B cell (primary cell): ENCODE measurements at regions of chr16 and their contacts with region 1.

Region 1: DNA sequence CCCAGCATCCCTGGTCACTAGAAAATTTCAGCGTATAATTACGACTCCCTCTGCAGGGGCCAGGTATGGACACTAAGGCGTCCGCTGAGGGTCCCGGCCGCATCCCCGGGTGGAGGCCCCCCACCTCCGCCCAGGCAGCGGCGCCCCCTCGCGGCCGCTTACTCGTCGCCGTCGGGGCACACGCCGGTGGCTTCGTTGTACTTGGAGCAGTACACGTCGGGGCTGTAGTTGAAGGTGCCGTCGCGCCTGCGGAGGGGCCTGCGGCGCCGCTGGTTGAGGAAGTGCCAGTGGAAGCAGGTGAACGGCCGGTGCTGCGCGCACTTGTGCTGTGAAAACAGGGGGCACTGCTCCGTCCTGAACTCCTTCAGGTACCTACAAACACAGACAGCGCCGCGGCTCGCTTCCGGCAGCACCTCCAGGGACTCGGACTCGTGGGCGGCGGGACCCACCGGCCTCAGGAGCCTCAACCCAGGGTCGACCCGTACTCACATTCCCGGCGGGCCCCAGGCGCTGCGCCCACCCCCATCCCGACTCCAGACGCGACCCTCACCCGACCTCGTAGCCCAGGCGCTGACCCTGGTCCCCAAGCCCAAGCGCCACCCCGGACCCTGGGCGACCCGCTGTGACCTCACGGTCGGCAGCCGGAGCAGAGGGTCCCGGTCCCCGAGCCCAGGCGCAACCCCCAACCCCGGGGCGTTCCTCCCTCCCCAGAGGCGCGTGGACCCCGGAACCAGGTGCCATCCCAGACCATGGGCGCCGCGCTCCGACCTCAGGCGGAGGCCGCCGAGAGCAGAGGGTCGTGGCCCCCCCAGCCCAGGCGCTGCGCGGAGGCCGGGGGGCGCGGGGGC is 596 bp downstream of the UNKL start:
- DNase-seq: peak; percentile 84
- ATAC-seq: peak; percentile 59
- H3K4me3 ChIP-seq: peak overlapping the region in 4 of 5 experiments; percentile 76 to 92 (median 88)
- H3K4me3 Mint-ChIP-seq: peak overlapping the region; percentile 90
- H3K27ac ChIP-seq: peak overlapping the region; percentile 70 to 92
- H3K27ac Mint-ChIP-seq: peak overlapping the region; percentile 95
- H3K4me1 ChIP-seq: peaks cover 6 to 19% of the 10 kb centered on the region in 2 donors
- H3K4me1 Mint-ChIP-seq: peaks cover 18% of the 10 kb centered on the region
- H3K27me3 ChIP-seq: no peaks in the 10 kb centered on the region
- H3K27me3 Mint-ChIP-seq: no peaks in the 10 kb centered on the region
- CTCF ChIP-seq: peak; percentile 72

Region 2: DNA sequence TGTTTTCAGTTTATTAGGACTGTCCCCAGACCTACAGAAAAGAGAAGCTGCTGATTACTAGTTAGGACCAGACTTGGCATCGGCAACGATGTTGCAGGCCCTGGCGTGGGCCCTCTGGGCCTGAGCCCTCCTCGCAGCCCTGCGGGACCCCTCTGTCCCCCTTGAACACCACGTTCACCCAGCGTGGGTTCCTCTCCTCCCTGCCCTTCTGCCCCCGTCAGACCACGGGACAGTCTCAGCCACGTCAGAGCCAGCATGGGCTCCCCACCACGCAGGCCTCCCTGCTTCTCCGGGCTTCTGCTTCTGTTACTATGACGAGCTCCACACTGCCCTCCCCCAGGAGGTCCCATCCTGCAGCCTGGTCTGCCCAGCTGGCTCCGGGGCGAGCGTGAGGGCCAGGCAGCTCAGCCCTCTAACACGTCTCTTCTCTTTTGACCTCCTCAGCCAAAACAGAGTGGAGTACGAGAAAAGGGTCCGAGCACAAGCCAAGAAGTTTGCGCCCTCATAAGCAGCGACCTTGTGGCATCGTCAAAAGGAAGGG is 89.6 kb before region 1 on chr16:
- CTCF ChIA-PET with region 1: no interaction called
- POLR2A ChIA-PET with region 1: interaction called, 13 read pairs
- intact Hi-C with region 1: no loop called
- DNase-seq: no peak
- ATAC-seq: no peak
- H3K4me3 ChIP-seq: no peak overlapping the region
- H3K4me3 Mint-ChIP-seq: no peak overlapping the region
- H3K27ac ChIP-seq: no peak overlapping the region
- H3K27ac Mint-ChIP-seq: peak overlapping the region; percentile 77
- H3K4me1 ChIP-seq: peaks cover 0 to 23% of the 10 kb centered on the region in 2 donors
- H3K4me1 Mint-ChIP-seq: peaks cover 5% of the 10 kb centered on the region
- H3K27me3 ChIP-seq: no peaks in the 10 kb centered on the region
- H3K27me3 Mint-ChIP-seq: no peaks in the 10 kb centered on the region
- CTCF ChIP-seq: no peak

Region 3: GRCh38 chr16:1378804-1379303 is 35.1 kb before region 1 on chr16:
- CTCF ChIA-PET with region 1: interaction called, 4 read pairs
- POLR2A ChIA-PET with region 1: no interaction called
- intact Hi-C with region 1: loop called (anchors 5 kb)
- DNase-seq: peak; percentile 75
- ATAC-seq: peak; percentile 55
- H3K4me3 ChIP-seq: peak overlapping the region in 3 of 5 experiments; percentile 39 to 52 (median 51)
- H3K4me3 Mint-ChIP-seq: peak overlapping the region; percentile 77
- H3K27ac ChIP-seq: peak overlapping the region in 1 of 2 donors; percentile 33
- H3K27ac Mint-ChIP-seq: peak overlapping the region; percentile 16
- H3K4me1 ChIP-seq: peaks cover 10 to 14% of the 10 kb centered on the region in 2 donors
- H3K4me1 Mint-ChIP-seq: peaks cover 15% of the 10 kb centered on the region
- H3K27me3 ChIP-seq: no peaks in the 10 kb centered on the region
- H3K27me3 Mint-ChIP-seq: no peaks in the 10 kb centered on the region
- CTCF ChIP-seq: no peak

Region 4: DNA sequence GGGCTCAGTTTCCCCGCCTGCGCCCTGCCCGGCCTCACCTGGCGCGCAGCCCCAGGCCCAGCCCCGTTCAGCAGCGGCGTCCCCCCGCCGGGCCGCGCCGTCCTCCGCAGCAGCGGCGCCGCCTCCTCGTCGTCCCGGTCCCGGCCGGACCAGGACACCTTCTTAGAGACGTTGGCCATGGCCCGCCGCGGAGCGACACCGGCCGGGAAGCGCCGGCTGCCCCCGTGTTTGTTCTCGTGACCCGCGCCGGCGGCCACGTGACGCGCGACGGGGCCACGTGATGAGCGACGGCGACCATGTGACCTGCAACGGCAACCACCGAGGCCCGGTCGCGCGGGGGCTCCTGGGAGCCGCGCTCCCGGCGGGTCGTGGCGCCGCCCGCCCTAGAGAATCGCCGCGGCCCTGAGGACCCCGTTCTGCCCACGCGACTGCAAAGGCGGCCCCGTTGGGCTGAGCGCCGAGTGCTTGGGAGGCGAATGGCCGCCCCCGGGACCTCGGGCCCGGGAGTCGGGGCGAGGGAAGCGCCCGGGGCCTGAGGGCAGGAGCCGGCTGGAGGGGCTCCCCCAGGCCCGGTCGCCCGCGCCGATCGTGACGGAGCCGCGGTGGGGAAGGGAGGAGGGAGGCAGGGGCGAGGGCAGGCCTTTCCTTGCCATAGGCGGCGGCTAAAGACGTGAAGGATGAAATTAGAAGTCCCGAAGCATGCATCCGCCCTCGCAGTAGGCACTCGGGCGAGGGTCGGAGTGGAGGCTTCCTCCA is 61.1 kb after region 1 on chr16 and contains the start of gene CLCN7:
- CTCF ChIA-PET with region 1: no interaction called
- POLR2A ChIA-PET with region 1: no interaction called
- intact Hi-C with region 1: loop called (anchors 2 kb)
- DNase-seq: peak; percentile 95
- ATAC-seq: peak; percentile 79
- H3K4me3 ChIP-seq: peak within 1 kb of the TSS; percentile 57 to 80 (median 70)
- H3K4me3 Mint-ChIP-seq: peak within 1 kb of the TSS; percentile 88
- H3K27ac ChIP-seq: peak within 1 kb of the TSS; percentile 88 to 96
- H3K27ac Mint-ChIP-seq: peak within 1 kb of the TSS; percentile 93
- H3K4me1 ChIP-seq: peaks cover 50 to 62% of the 10 kb centered on the region in 2 donors
- H3K4me1 Mint-ChIP-seq: peaks cover 54% of the 10 kb centered on the region
- H3K27me3 ChIP-seq: no peaks in the 10 kb centered on the region
- H3K27me3 Mint-ChIP-seq: no peaks in the 10 kb centered on the region
- CTCF ChIP-seq: no peak
- total RNA-seq, gene CLCN7: 274 and 286 TPM in 2 replicates

Region 5: GRCh38 chr16:1772736-1773584 is 359.1 kb after region 1 on chr16 and contains the starts of genes EME2 and MRPS34:
- CTCF ChIA-PET with region 1: no interaction called
- POLR2A ChIA-PET with region 1: no interaction called
- intact Hi-C with region 1: loop called (anchors 5 kb)
- DNase-seq: peak; percentile 89
- ATAC-seq: peak; percentile 61
- H3K4me3 ChIP-seq: peak within 1 kb of the TSS; percentile 53 to 87 (median 82)
- H3K4me3 Mint-ChIP-seq: peak within 1 kb of the TSS; percentile 95
- H3K27ac ChIP-seq: peak within 1 kb of the TSS; percentile 38 to 90
- H3K27ac Mint-ChIP-seq: peak within 1 kb of the TSS; percentile 97
- H3K4me1 ChIP-seq: peaks cover 22 to 40% of the 10 kb centered on the region in 2 donors
- H3K4me1 Mint-ChIP-seq: peaks cover 27% of the 10 kb centered on the region
- H3K27me3 ChIP-seq: no peaks in the 10 kb centered on the region
- H3K27me3 Mint-ChIP-seq: no peaks in the 10 kb centered on the region
- CTCF ChIP-seq: peak; percentile 88
- total RNA-seq, gene EME2: 42.5 and 43.9 TPM in 2 replicates
- total RNA-seq, gene MRPS34: 44.6 and 54.5 TPM in 2 replicates